Naive thymus-derived CD4-positive, alpha-beta T cell (primary cell): ENCODE measurements at regions of chr12 and their contacts with region 1.

Region 1: DNA sequence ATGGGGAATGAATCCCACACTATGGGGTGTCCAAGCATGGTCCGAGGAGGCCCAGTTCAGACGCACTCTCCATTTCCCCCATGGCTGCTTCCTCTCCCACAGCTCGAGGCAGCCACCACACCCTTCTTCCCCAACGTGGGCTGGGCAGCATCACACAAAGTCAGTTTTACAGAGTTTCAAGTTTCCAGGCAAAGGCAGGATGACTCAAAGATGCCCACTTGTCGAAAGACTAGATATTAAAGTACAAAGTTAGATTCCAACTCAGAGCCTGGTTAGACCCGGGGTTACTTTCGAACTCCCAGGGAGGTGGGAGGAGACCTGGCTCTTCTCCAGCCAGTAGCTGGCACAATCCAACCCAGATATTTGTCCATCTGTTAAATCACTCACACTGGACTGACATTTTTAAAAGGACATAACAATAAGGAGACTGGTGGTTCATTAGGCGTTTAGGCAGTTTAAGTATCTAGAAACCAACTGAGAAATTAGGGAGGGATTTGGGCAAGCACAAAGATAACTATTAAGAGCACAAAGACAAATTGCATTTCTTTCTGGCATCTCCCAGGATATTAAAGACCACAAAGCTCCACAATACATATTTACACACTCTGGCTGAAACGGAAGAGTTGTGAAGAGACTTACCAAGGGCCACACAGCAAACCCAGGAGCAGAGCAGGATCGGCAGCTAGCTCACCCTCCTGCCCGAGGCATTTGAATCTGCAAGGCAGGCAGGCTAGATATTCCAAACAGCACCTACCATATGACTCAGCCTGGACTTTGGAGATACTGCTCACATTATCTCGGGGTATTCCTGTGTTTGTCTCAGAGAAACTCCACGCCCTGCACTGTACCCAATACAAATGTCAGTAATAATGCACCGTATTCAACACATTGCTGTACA is 34.8 kb downstream of the TMCC3 start:
- DNase-seq: no peak
- ATAC-seq: peak; percentile 20
- H3K4me3 ChIP-seq: no peak overlapping the region
- H3K4me3 Mint-ChIP-seq: no peak overlapping the region
- H3K27ac ChIP-seq: no peak overlapping the region
- H3K27ac Mint-ChIP-seq: no peak overlapping the region
- H3K4me1 ChIP-seq: no peaks in the 10 kb centered on the region
- H3K4me1 Mint-ChIP-seq: peaks cover 0 to 6% (median 0%) of the 10 kb centered on the region in 7 donors
- H3K27me3 ChIP-seq: no peaks in the 10 kb centered on the region
- H3K27me3 Mint-ChIP-seq: peaks cover 0 to 7% (median 0%) of the 10 kb centered on the region in 5 donors

Region 2: DNA sequence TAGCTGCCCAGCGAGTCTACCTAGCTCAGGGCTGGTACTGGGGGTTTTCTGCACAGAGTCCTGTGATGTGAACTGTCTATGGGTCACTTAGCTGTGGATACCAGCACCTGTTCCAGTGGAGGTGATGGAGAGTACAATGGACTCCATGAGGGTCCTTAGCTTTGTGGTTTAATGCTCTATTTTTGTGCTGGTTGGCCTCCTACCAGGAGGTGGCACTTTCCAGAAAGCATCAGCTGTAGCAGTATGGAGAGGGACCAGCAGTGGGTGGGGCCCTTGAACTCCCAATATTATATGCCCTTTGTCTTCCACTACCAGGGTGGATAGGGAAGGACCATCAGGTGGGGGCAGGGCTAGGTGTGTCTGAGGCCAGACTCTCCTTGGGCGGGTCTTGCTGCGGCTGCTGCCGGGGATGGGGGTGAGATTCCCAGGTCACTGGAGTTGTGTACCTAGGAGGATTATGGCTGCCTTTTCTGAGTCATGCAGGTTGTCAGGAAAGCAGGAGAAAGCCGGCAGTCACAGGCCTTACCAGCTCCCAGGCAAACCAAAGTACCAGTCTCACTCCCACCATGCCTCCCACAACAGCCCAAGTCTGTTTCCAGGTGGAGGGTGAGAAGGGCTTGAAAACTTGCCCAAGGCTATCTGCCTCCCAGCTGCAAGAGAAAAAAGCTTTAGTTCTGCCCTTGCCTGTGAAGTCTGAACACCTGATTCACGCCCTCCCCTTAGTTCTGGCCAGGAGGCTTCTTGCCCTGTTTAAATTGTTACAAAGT is 1400.8 kb before region 1 on chr12:
- CTCF ChIA-PET with region 1: no interaction called
- POLR2A ChIA-PET with region 1: no interaction called
- intact Hi-C with region 1: no loop called
- DNase-seq: no peak
- ATAC-seq: no peak
- H3K4me3 ChIP-seq: no peak overlapping the region
- H3K4me3 Mint-ChIP-seq: no peak overlapping the region
- H3K27ac ChIP-seq: no peak overlapping the region
- H3K27ac Mint-ChIP-seq: peak overlapping the region in 1 of 9 donors; percentile 48
- H3K4me1 ChIP-seq: no peaks in the 10 kb centered on the region
- H3K4me1 Mint-ChIP-seq: no peaks in the 10 kb centered on the region
- H3K27me3 ChIP-seq: no peaks in the 10 kb centered on the region
- H3K27me3 Mint-ChIP-seq: peaks cover 0 to 6% (median 3%) of the 10 kb centered on the region in 5 donors

Region 3: GRCh38 chr12:94649349-94650142 is 34.0 kb after region 1 on chr12:
- CTCF ChIA-PET with region 1: no interaction called
- POLR2A ChIA-PET with region 1: no interaction called
- intact Hi-C with region 1: loop called in 1 of 2 experiments (anchors 5 kb)
- DNase-seq: peak in 7 of 9 donors; percentile 21 to 48 (median 31)
- ATAC-seq: peak; percentile 80
- H3K4me3 ChIP-seq: peak overlapping the region; percentile 37
- H3K4me3 Mint-ChIP-seq: peak overlapping the region; percentile 65 to 85 (median 83)
- H3K27ac ChIP-seq: no peak overlapping the region
- H3K27ac Mint-ChIP-seq: no peak overlapping the region
- H3K4me1 ChIP-seq: no peaks in the 10 kb centered on the region
- H3K4me1 Mint-ChIP-seq: peaks cover 9 to 19% (median 16%) of the 10 kb centered on the region in 7 donors
- H3K27me3 ChIP-seq: peaks cover 3 to 10% of the 10 kb centered on the region in 2 donors
- H3K27me3 Mint-ChIP-seq: peaks cover 49 to 81% (median 56%) of the 10 kb centered on the region in 5 donors

Region 4: GRCh38 chr12:94762259-94762942 is 146.9 kb after region 1 on chr12:
- CTCF ChIA-PET with region 1: no interaction called
- POLR2A ChIA-PET with region 1: no interaction called
- intact Hi-C with region 1: loop called in 1 of 2 experiments (anchors 5 kb)
- DNase-seq: no peak
- ATAC-seq: peak; percentile 22
- H3K4me3 ChIP-seq: no peak overlapping the region
- H3K4me3 Mint-ChIP-seq: peak overlapping the region in 1 of 10 donors; percentile 17
- H3K27ac ChIP-seq: no peak overlapping the region
- H3K27ac Mint-ChIP-seq: peak overlapping the region in 2 of 9 donors; percentile 7 to 36
- H3K4me1 ChIP-seq: no peaks in the 10 kb centered on the region
- H3K4me1 Mint-ChIP-seq: peaks cover 0 to 12% (median 2%) of the 10 kb centered on the region in 7 donors
- H3K27me3 ChIP-seq: no peaks in the 10 kb centered on the region
- H3K27me3 Mint-ChIP-seq: peaks cover 0 to 16% (median 9%) of the 10 kb centered on the region in 5 donors